ENCODE measurements at regions of chr5 and their contacts with region 1.

Region 1: GRCh38 chr5:138789771-138790242 is 36.6 kb downstream of the CTNNA1 start:
- H3K4me3 ChIP-seq: no peak overlapping the region
- H3K27ac ChIP-seq: no peak overlapping the region
- H3K4me1 ChIP-seq: no peaks in the 10 kb centered on the region; the same call in 1 of the 2 replicates
- CTCF ChIP-seq: 0 out of 2 replicates have a peak, but pooled peaks have one; percentile 30

Region 2: DNA sequence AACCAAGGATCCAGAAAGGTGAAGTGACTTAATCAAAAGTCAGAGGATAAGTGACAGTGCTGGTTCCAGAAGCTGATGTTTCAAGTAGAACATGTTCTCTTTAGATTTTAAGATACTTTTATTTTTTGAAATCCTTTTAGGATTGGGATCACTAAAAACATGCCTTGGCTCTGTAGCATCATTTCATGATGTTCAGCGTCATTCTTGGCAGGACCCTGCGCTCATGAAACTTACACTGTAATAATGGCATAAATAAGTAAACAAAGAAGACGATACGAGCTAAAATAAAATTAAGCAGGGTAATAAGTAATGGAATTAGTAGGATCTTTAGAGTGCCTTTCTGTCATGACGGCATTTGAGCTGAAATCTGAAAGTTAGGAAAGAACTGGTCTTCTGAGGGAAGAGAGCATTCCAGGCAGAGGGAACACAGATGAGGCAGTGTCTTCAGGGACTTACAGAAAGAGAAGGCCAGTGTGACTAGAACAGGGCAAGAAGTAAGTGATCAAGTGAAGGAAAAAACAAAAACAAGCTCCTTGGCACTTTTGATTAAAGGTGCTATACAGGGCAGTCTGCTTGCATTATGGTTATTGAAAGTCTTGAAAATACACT is 16.7 kb before region 1 on chr5:
- CTCF ChIA-PET with region 1: interaction called, 16 read pairs
- POLR2A ChIA-PET with region 1: no interaction called
- H3K4me3 ChIP-seq: no peak overlapping the region
- H3K27ac ChIP-seq: no peak overlapping the region
- H3K4me1 ChIP-seq: peaks cover 23% of the 10 kb centered on the region
- CTCF ChIP-seq: no peak

Region 3: DNA sequence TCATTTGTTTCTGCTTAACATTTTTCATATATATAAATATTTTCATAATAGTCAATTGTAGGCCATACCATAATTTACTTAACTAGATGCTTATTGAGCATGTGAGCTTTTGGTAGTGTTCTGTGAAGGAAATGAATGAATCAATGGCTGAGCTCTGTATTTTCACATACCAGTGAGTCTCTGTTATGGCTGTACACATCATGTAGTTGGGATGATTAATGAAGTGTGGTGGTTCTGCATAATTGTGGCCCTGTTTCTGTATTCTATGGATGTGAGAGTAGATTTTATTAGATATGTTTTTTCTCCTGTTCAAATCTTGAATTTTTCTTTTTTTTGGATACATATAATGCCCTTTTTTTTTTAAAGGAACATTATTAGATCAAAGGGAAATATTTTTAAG is 19.6 kb after region 1 on chr5:
- CTCF ChIA-PET with region 1: interaction called, 17 read pairs
- POLR2A ChIA-PET with region 1: no interaction called
- H3K4me3 ChIP-seq: no peak overlapping the region
- H3K27ac ChIP-seq: no peak overlapping the region
- H3K4me1 ChIP-seq: no peaks in the 10 kb centered on the region; the same call in 1 of the 2 replicates
- CTCF ChIP-seq: no peak

Region 4: DNA sequence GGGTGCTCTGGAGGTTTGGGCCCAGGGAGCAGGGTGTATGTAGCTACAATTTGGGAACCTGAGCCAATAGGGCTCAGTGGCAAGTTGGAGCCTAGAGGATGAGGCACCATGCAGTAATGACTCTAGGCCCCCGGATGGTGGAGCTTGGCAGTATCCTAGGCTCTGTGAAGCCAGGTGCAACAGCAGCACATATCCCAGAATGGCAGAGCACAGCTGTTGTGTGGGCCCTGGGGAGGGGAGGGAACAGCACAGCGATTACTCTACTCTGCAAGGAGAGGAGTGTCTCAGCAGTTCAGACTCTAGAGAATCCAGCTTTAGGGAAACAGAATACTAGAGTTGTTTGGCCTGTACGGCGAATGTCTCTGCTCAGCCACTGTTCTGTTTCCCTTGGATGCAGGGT is 29.3 kb after region 1 on chr5:
- CTCF ChIA-PET with region 1: interaction called, 17 read pairs
- POLR2A ChIA-PET with region 1: no interaction called
- H3K4me3 ChIP-seq: no peak overlapping the region
- H3K27ac ChIP-seq: 0 out of 2 replicates have a peak overlapping the region, but pooled peaks have one; percentile 6
- H3K4me1 ChIP-seq: peaks cover 3% of the 10 kb centered on the region
- CTCF ChIP-seq: no peak

Region 5: GRCh38 chr5:138824924-138825863 is 35.4 kb after region 1 on chr5:
- CTCF ChIA-PET with region 1: interaction called, 13 read pairs
- POLR2A ChIA-PET with region 1: no interaction called
- H3K4me3 ChIP-seq: no peak overlapping the region
- H3K27ac ChIP-seq: no peak overlapping the region
- H3K4me1 ChIP-seq: peaks cover 12% of the 10 kb centered on the region
- CTCF ChIP-seq: 0 out of 2 replicates have a peak, but pooled peaks have one; percentile 9

Region 6: GRCh38 chr5:139108063-139108824 is 318.4 kb after region 1 on chr5:
- CTCF ChIA-PET with region 1: no interaction called
- POLR2A ChIA-PET with region 1: no interaction called
- H3K4me3 ChIP-seq: no peak overlapping the region
- H3K27ac ChIP-seq: no peak overlapping the region
- H3K4me1 ChIP-seq: no peaks in the 10 kb centered on the region
- CTCF ChIP-seq: no peak

Measured in HEK293 (cell line).